ENCODE measurements at regions of chr5 and their contacts with region 1.

Region 1: DNA sequence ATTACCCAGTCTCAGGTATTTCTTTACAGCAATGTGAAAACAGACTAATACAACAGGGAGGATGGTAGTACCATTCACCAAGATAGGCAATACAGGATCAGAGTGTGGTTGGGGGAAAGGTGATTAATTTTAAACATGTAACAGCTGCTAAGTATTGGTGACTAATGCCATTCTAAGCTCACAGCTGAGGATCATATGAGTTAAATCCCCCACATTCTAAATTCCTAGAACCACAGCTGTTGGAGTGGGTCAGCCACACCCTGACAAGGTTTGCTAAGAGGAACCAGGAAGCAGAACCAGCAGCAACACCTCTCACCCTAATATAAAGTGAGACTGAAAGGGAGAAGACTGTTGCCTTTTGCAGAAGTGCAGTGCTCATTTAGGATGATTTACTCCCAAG is 24.8 kb downstream of the HSPB3 start:
- DNase-seq: no peak
- ATAC-seq: no peak
- H3K4me3 ChIP-seq: no peak overlapping the region
- H3K27ac ChIP-seq: no peak overlapping the region
- H3K4me1 ChIP-seq: no peaks in the 10 kb centered on the region
- H3K27me3 ChIP-seq: no peaks in the 10 kb centered on the region
- CTCF ChIP-seq: no peak

Region 2: GRCh38 chr5:54243473-54244080 is 236.7 kb before region 1 on chr5:
- intact Hi-C with region 1: loop called in 2 of 10 experiments (anchors 5 kb)
- DNase-seq: peak in 1 of 2 donors; percentile 21
- ATAC-seq: no peak
- H3K4me3 ChIP-seq: no peak overlapping the region
- H3K27ac ChIP-seq: no peak overlapping the region
- H3K4me1 ChIP-seq: peaks cover 0 to 70% (median 14%) of the 10 kb centered on the region in 9 donors
- H3K27me3 ChIP-seq: no peaks in the 10 kb centered on the region
- CTCF ChIP-seq: peak; percentile 29 to 81 (median 70)

Region 3: GRCh38 chr5:54249210-54250028 is 230.9 kb before region 1 on chr5:
- intact Hi-C with region 1: loop called in 4 of 10 experiments (anchors 5 kb)
- DNase-seq: peak; percentile 24 to 29
- ATAC-seq: peak in 3 of 8 donors; percentile 15 to 41 (median 25)
- H3K4me3 ChIP-seq: no peak overlapping the region
- H3K27ac ChIP-seq: peak overlapping the region in 1 of 10 donors; percentile 70
- H3K4me1 ChIP-seq: peaks cover 0 to 89% (median 30%) of the 10 kb centered on the region in 9 donors
- H3K27me3 ChIP-seq: no peaks in the 10 kb centered on the region
- CTCF ChIP-seq: no peak

Region 4: GRCh38 chr5:54254482-54255198 is 225.7 kb before region 1 on chr5:
- intact Hi-C with region 1: loop called in 4 of 10 experiments (anchors 5 kb)
- DNase-seq: peak in 1 of 2 donors; percentile 30
- ATAC-seq: peak; percentile 66 to 90 (median 86)
- H3K4me3 ChIP-seq: peak overlapping the region in 9 of 10 donors; percentile 4 to 46 (median 25)
- H3K27ac ChIP-seq: peak overlapping the region; percentile 20 to 75 (median 65)
- H3K4me1 ChIP-seq: peaks cover 0 to 82% (median 37%) of the 10 kb centered on the region in 9 donors
- H3K27me3 ChIP-seq: no peaks in the 10 kb centered on the region
- CTCF ChIP-seq: peak; percentile 15 to 70 (median 49)

Region 5: DNA sequence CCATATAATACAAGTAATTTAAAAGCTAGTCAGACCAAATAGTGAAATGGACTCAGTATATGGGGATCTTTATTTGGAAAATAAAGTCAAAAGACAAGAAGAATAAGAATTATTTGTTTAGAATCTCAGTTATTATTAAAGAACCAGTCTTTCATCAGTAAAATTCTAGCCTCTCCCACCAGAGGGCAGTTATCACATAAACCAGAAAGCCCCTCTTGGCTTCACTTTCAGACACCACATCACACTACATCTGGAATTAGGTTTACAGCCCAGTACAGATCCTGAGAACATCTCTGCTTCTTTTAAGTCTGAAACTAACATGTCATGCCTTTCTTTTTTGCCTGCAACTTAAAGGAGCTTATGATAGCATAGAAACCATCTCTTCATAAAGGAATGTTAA is 37.0 kb before region 1 on chr5:
- intact Hi-C with region 1: loop called in 3 of 10 experiments (anchors 5 kb)
- DNase-seq: peak in 1 of 2 donors; percentile 18
- ATAC-seq: no peak
- H3K4me3 ChIP-seq: no peak overlapping the region
- H3K27ac ChIP-seq: no peak overlapping the region
- H3K4me1 ChIP-seq: peaks cover 0 to 27% (median 14%) of the 10 kb centered on the region in 9 donors
- H3K27me3 ChIP-seq: no peaks in the 10 kb centered on the region
- CTCF ChIP-seq: peak in 8 of 9 donors; percentile 6 to 62 (median 48)